CD8-positive, alpha-beta T cell (primary cell): ENCODE measurements at regions of chr9 and their contacts with region 1.

Region 1: GRCh38 chr9:122810306-122810946 is 10.5 kb downstream of the OR1K1 start:
- DNase-seq: peak; percentile 50 to 86 (median 77)
- ATAC-seq: peak; percentile 97
- H3K4me3 ChIP-seq: no peak overlapping the region
- H3K4me3 Mint-ChIP-seq: no peak overlapping the region
- H3K27ac ChIP-seq: no peak overlapping the region
- H3K27ac Mint-ChIP-seq: no peak overlapping the region
- H3K4me1 ChIP-seq: peaks cover 10% of the 10 kb centered on the region
- H3K4me1 Mint-ChIP-seq: peaks cover 18% of the 10 kb centered on the region
- H3K27me3 ChIP-seq: no peaks in the 10 kb centered on the region
- H3K27me3 Mint-ChIP-seq: no peaks in the 10 kb centered on the region
- CTCF ChIP-seq: peak; percentile 95

Region 2: GRCh38 chr9:122125158-122125508 is 685.3 kb before region 1 on chr9:
- CTCF ChIA-PET with region 1: interaction called, 39 read pairs
- POLR2A ChIA-PET with region 1: no interaction called
- intact Hi-C with region 1: loop called in 1 of 2 experiments (anchors 1 kb)
- DNase-seq: peak; percentile 62 to 87 (median 76)
- ATAC-seq: peak; percentile 83
- H3K4me3 ChIP-seq: no peak overlapping the region
- H3K4me3 Mint-ChIP-seq: peak overlapping the region; percentile 33
- H3K27ac ChIP-seq: no peak overlapping the region
- H3K27ac Mint-ChIP-seq: no peak overlapping the region
- H3K4me1 ChIP-seq: peaks cover 18% of the 10 kb centered on the region
- H3K4me1 Mint-ChIP-seq: peaks cover 21% of the 10 kb centered on the region
- H3K27me3 ChIP-seq: peaks cover 12 to 16% of the 10 kb centered on the region in 2 experiments
- H3K27me3 Mint-ChIP-seq: peaks cover 31% of the 10 kb centered on the region
- CTCF ChIP-seq: peak; percentile 82

Region 3: GRCh38 chr9:122464633-122465567 is 345.5 kb before region 1 on chr9:
- CTCF ChIA-PET with region 1: interaction called, 75 read pairs
- POLR2A ChIA-PET with region 1: no interaction called
- intact Hi-C with region 1: loop called in 1 of 2 experiments (anchors 1 kb)
- DNase-seq: peak; percentile 37 to 79 (median 64)
- ATAC-seq: peak; percentile 78
- H3K4me3 ChIP-seq: peak overlapping the region; percentile 47 to 49
- H3K4me3 Mint-ChIP-seq: peak overlapping the region; percentile 89
- H3K27ac ChIP-seq: peak overlapping the region; percentile 39 to 58
- H3K27ac Mint-ChIP-seq: peak overlapping the region; percentile 87
- H3K4me1 ChIP-seq: peaks cover 5% of the 10 kb centered on the region
- H3K4me1 Mint-ChIP-seq: peaks cover 10% of the 10 kb centered on the region
- H3K27me3 ChIP-seq: no peaks in the 10 kb centered on the region
- H3K27me3 Mint-ChIP-seq: peaks cover 28% of the 10 kb centered on the region
- CTCF ChIP-seq: peak; percentile 81

Region 4: DNA sequence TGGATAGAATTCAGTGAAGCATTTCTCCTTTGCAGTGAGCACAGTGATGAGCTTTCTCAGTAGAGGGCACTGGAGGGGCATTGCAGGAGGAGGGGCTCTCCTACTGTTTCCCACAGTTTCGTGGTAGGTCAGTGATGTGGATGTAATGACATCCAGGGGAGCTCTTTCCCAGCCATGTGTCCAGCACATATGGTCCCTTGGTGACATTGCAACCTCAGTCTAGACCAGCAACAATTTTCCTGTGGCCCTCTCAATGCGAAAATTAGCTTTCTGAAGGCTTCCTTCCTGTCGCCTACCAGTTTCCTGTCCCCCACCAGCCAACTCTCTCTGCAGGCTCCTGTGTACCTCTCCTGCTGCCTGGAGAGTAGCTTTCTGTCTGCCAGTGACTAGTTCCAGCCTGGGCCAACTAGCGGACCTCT is 24.9 kb after region 1 on chr9:
- CTCF ChIA-PET with region 1: interaction called, 10 read pairs
- POLR2A ChIA-PET with region 1: interaction called, 3 read pairs
- intact Hi-C with region 1: no loop called
- DNase-seq: peak in 7 of 9 experiments; percentile 8 to 64 (median 21)
- ATAC-seq: peak; percentile 79
- H3K4me3 ChIP-seq: peak overlapping the region; percentile 1 to 34
- H3K4me3 Mint-ChIP-seq: peak overlapping the region; percentile 75
- H3K27ac ChIP-seq: peak overlapping the region in 1 of 2 experiments; percentile 43
- H3K27ac Mint-ChIP-seq: peak overlapping the region; percentile 83
- H3K4me1 ChIP-seq: peaks cover 16% of the 10 kb centered on the region
- H3K4me1 Mint-ChIP-seq: peaks cover 19% of the 10 kb centered on the region
- H3K27me3 ChIP-seq: no peaks in the 10 kb centered on the region
- H3K27me3 Mint-ChIP-seq: no peaks in the 10 kb centered on the region
- CTCF ChIP-seq: no peak

Region 5: DNA sequence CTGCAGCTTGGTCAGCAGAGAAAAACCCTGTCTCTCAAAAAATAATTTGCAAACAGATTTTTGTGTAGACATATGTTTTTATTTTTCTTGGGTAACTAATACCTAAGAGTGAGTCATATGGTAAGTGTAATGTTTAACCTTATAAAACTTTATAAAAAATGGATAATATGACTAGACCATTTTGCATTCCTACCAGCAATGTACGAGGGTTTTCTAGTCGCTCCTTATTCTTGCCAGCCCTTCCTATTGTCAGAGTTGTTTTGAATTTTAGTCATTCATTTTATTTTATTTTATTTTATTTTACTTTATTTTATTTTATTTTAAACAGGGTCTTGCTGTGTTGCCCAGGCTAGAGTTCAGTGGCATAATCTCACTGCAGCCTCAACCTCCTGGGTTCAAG is 168.2 kb after region 1 on chr9:
- CTCF ChIA-PET with region 1: no interaction called
- POLR2A ChIA-PET with region 1: no interaction called
- intact Hi-C with region 1: no loop called
- DNase-seq: no peak
- ATAC-seq: no peak
- H3K4me3 ChIP-seq: no peak overlapping the region
- H3K4me3 Mint-ChIP-seq: no peak overlapping the region
- H3K27ac ChIP-seq: no peak overlapping the region
- H3K27ac Mint-ChIP-seq: no peak overlapping the region
- H3K4me1 ChIP-seq: no peaks in the 10 kb centered on the region
- H3K4me1 Mint-ChIP-seq: peaks cover 3% of the 10 kb centered on the region
- H3K27me3 ChIP-seq: no peaks in the 10 kb centered on the region
- H3K27me3 Mint-ChIP-seq: no peaks in the 10 kb centered on the region
- CTCF ChIP-seq: no peak